PC-3 (cell line): ENCODE measurements at regions of chr3 and their contacts with region 1.

Region 1: GRCh38 chr3:57852896-57853295 is 96.8 kb downstream of the SLMAP start:
- DNase-seq: peak; percentile 54
- ATAC-seq: peak; percentile 64
- H3K4me3 ChIP-seq: no peak overlapping the region
- H3K27ac ChIP-seq: no peak overlapping the region
- H3K4me1 ChIP-seq: no peaks in the 10 kb centered on the region
- H3K27me3 ChIP-seq: no peaks in the 10 kb centered on the region
- CTCF ChIP-seq: peak; percentile 73

Region 2: GRCh38 chr3:57646723-57647122 is 206.2 kb before region 1 on chr3:
- CTCF ChIA-PET with region 1: no interaction called
- POLR2A ChIA-PET with region 1: no interaction called
- intact Hi-C with region 1: loop called (anchors 2 kb)
- DNase-seq: peak; percentile 49
- ATAC-seq: peak; percentile 97
- H3K4me3 ChIP-seq: no peak overlapping the region
- H3K27ac ChIP-seq: no peak overlapping the region
- H3K4me1 ChIP-seq: no peaks in the 10 kb centered on the region
- H3K27me3 ChIP-seq: no peaks in the 10 kb centered on the region
- CTCF ChIP-seq: peak; percentile 58

Region 3: GRCh38 chr3:57951066-57951882 is 98.4 kb after region 1 on chr3:
- CTCF ChIA-PET with region 1: no interaction called
- POLR2A ChIA-PET with region 1: no interaction called
- intact Hi-C with region 1: no loop called
- DNase-seq: peak; percentile 76
- ATAC-seq: peak; percentile 74
- H3K4me3 ChIP-seq: no peak overlapping the region
- H3K27ac ChIP-seq: peak overlapping the region; percentile 53
- H3K4me1 ChIP-seq: peaks cover 29% of the 10 kb centered on the region
- H3K27me3 ChIP-seq: no peaks in the 10 kb centered on the region
- CTCF ChIP-seq: no peak

Region 4: GRCh38 chr3:57992452-57993213 is 139.7 kb after region 1 on chr3:
- CTCF ChIA-PET with region 1: no interaction called
- POLR2A ChIA-PET with region 1: no interaction called
- intact Hi-C with region 1: no loop called
- DNase-seq: no peak
- ATAC-seq: no peak; the same call in 1 of the 2 replicates
- H3K4me3 ChIP-seq: no peak overlapping the region
- H3K27ac ChIP-seq: no peak overlapping the region
- H3K4me1 ChIP-seq: peaks cover 26% of the 10 kb centered on the region
- H3K27me3 ChIP-seq: no peaks in the 10 kb centered on the region
- CTCF ChIP-seq: no peak

Region 5: DNA sequence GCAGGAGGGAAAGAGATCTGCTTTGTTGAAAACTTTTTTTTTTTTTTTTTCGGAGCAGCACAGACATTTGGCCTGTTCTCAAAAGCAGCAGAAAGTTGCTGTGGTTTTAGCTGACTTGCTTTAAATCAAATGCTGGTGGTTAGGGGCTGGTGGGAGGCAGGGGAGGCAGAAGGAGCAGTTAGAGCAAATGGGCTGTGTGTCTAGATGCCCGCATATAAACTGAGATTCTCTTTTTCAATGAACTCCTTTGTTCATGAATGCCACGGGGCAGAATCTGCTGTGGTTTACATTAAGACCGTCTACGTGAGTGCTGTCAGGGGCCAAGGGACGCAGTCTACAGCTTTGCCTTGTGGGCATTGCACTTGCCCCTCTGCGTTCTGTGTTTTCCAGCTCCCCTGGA is 251.3 kb after region 1 on chr3:
- CTCF ChIA-PET with region 1: no interaction called
- POLR2A ChIA-PET with region 1: interaction called, 15 read pairs
- intact Hi-C with region 1: no loop called
- DNase-seq: no peak
- ATAC-seq: no peak
- H3K4me3 ChIP-seq: no peak overlapping the region
- H3K27ac ChIP-seq: no peak overlapping the region
- H3K4me1 ChIP-seq: no peaks in the 10 kb centered on the region
- H3K27me3 ChIP-seq: no peaks in the 10 kb centered on the region
- CTCF ChIP-seq: no peak

Region 6: DNA sequence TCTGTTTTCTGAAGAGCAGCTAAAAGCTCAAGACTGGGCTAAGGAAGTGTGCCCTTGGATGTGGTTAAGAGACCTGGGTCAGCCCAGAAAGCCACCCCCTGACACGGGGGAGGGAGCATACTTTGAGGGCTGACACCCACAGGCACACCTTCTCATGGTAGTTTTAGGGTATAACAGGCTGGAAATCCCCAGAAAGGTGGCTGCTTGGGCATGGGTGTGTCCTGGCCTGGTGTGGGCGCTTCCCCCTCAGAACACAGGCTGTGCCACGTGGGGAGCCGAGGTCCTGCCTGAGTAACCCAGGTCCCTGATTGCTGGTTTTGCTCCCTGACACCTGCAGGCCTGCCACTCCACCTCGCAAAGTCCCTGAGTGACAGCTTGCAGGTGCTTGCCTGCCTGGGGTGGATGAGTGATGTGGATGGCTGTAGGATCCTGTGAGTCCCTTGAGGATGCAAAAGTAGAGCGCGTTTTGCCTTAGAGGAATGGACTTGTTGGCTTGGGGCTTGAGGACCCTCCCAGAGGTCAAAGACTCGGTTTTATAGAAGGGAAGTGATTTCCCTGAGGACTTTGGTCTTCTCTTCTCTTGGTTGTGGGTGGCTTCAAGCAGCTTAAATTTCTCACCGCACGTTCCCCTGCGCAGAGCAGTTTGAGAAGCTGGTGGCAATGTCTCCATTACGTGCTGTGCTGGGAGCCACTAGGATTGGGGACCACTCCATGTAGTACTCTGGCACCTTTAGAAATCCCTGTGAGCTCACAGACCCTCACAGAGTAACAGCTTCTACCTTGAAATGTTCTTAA is 263.5 kb after region 1 on chr3:
- CTCF ChIA-PET with region 1: no interaction called
- POLR2A ChIA-PET with region 1: no interaction called
- intact Hi-C with region 1: no loop called
- DNase-seq: no peak
- ATAC-seq: no peak
- H3K4me3 ChIP-seq: no peak overlapping the region
- H3K27ac ChIP-seq: no peak overlapping the region
- H3K4me1 ChIP-seq: peaks cover 11% of the 10 kb centered on the region
- H3K27me3 ChIP-seq: no peaks in the 10 kb centered on the region
- CTCF ChIP-seq: no peak